GM10248 (cell line): ENCODE measurements at regions of chr11 and their contacts with region 1.

Region 1: DNA sequence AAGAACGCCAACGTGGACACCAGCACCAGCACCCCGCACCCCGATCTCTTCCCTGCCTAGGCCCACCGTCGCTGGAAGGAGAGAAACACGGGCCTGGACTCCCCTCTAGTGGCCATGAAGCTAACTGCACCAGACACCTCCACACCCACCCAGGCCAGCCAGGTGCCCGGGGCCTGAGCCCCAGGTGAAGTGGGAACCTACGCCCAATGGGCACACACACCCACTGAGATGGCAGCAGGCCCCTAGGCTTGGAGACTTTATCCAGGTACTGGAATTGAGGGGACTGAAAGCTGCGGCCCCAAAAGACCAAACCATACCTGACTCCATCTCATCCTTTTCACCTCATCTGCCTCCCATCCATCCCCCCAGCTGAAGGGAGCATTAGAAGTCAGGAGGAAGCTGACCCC is 81.0 kb downstream of the BUD13 start:
- DNase-seq: peak; percentile 87
- CTCF ChIP-seq: peak; percentile 85

Region 2: GRCh38 chr11:116454020-116454645 is 237.6 kb before region 1 on chr11:
- CTCF ChIA-PET with region 1: interaction called, 17 read pairs
- POLR2A ChIA-PET with region 1: no interaction called
- DNase-seq: peak; percentile 47
- CTCF ChIP-seq: peak; percentile 40

Region 3: DNA sequence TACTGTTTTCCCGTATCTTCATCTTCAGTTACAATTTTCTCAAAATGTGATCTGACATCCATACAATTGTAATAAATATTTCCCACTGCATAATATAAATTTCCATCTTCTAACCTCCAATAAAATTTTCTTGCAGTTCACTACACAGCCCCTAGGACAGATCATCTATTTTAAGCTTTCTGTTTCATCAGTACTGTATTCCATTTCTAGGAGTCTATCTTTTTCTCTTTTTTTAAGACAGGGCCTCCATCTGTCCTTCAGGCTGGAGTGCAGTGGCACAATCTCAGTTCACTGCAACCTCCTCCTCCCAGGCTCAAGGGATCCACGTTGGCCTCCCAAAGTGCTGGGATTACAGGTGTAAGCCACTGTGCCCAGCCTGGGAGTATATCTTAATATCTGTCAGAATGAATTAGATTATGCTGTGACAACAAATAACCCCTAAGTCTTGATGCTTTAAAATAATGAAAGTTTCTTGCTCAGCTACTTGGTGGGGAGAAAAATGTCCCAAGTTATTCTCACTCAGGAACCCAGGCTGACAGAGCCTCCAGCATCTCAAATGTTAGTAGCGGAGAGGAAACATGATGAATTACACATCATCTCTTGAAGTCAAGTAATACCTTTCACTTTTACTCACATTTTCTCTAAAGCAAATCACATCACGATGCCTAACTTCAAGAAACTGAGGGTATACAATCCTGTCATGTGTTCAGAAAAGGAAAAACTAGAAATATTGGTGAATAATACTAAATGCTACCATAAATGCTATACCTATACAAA is 11.2 kb before region 1 on chr11:
- CTCF ChIA-PET with region 1: interaction called, 17 read pairs
- POLR2A ChIA-PET with region 1: no interaction called
- DNase-seq: no peak
- CTCF ChIP-seq: no peak